T-cell (primary cell): ENCODE measurements at regions of chr11 and their contacts with region 1.

Region 1: GRCh38 chr11:8566613-8567210 is 27.3 kb downstream of the STK33 start:
- DNase-seq: peak in 1 of 35 experiments; percentile 48
- ATAC-seq: no peak
- H3K4me3 ChIP-seq: no peak overlapping the region
- H3K4me3 Mint-ChIP-seq: no peak overlapping the region
- H3K27ac ChIP-seq: no peak overlapping the region
- H3K27ac Mint-ChIP-seq: no peak overlapping the region
- H3K4me1 ChIP-seq: no peaks in the 10 kb centered on the region
- H3K4me1 Mint-ChIP-seq: no peaks in the 10 kb centered on the region
- H3K27me3 ChIP-seq: peaks cover 0 to 3% of the 10 kb centered on the region in 2 experiments
- H3K27me3 Mint-ChIP-seq: peaks cover 31 to 36% of the 10 kb centered on the region in 2 donors

Region 2: GRCh38 chr11:8382436-8383053 is 184.2 kb before region 1 on chr11:
- CTCF ChIA-PET with region 1: no interaction called
- POLR2A ChIA-PET with region 1: no interaction called
- DNase-seq: no peak
- ATAC-seq: no peak
- H3K4me3 ChIP-seq: no peak overlapping the region
- H3K4me3 Mint-ChIP-seq: no peak overlapping the region
- H3K27ac ChIP-seq: no peak overlapping the region
- H3K27ac Mint-ChIP-seq: no peak overlapping the region
- H3K4me1 ChIP-seq: no peaks in the 10 kb centered on the region
- H3K4me1 Mint-ChIP-seq: no peaks in the 10 kb centered on the region
- H3K27me3 ChIP-seq: no peaks in the 10 kb centered on the region
- H3K27me3 Mint-ChIP-seq: peaks cover 4 to 8% of the 10 kb centered on the region in 2 donors

Region 3: DNA sequence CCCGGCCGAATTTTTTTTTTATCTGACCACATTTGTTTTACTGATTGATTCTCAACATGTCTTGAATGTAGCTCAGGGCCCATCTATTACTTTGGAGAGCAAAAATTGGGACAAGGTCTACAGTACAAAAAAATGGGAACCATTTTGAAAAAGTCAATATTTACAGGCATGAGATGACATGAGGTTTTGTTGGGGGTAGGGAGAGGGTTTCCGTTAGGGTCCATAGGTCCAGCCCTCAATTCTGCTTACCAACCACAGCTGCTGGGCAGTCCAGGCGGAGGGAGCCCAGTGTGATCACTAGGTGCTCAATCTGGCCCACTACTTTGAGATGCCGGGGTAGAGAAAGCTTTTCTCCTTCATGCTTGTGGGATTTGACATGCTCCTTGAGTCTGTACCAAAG is 418.8 kb after region 1 on chr11:
- CTCF ChIA-PET with region 1: no interaction called
- POLR2A ChIA-PET with region 1: interaction called in 1 of 2 experiments, 17 read pairs
- DNase-seq: no peak
- ATAC-seq: no peak
- H3K4me3 ChIP-seq: no peak overlapping the region
- H3K4me3 Mint-ChIP-seq: no peak overlapping the region
- H3K27ac ChIP-seq: no peak overlapping the region
- H3K27ac Mint-ChIP-seq: no peak overlapping the region
- H3K4me1 ChIP-seq: no peaks in the 10 kb centered on the region
- H3K4me1 Mint-ChIP-seq: no peaks in the 10 kb centered on the region
- H3K27me3 ChIP-seq: no peaks in the 10 kb centered on the region
- H3K27me3 Mint-ChIP-seq: peaks cover 8 to 13% of the 10 kb centered on the region in 2 donors